CD8-positive, alpha-beta T cell (primary cell): ENCODE measurements at regions of chr17 and their contacts with region 1.

Region 1: DNA sequence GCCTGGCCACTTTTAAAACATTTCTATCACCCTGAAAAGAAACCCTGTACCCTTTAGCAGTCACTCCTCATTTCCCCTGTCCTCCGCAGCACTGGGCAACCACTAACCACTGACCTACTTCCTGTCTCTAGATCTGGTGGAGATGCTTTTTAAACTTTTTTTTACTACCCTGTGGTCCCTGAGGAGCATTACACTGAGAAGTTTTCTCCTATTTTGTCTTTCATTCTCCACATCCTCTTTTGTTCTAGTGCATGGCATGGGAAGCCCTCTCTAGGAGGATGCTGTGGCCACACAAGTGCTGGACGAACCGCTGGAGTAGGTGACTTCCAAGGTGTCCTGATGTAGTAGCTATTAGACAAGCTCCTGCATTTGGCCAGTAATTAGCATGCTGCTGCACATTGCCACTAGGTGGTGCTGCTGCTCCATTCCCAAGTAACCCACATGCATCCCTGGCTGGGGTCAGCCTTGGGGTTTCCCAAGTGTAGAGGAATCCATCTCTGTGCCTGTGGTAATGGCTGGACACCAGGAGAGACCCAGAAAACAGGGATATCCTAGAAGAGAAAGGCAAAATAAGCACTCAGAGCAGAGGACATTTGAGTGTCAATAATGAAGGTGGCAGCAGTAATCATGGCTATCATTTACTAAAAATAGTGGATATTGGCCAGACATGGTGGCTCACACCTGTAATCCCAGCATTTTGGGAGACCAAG is 143.8 kb upstream of the CRHR1 start:
- DNase-seq: peak; percentile 46 to 83 (median 74)
- ATAC-seq: peak; percentile 68
- H3K4me3 ChIP-seq: no peak overlapping the region
- H3K4me3 Mint-ChIP-seq: no peak overlapping the region
- H3K27ac ChIP-seq: no peak overlapping the region
- H3K27ac Mint-ChIP-seq: peak overlapping the region; percentile 77
- H3K4me1 ChIP-seq: no peaks in the 10 kb centered on the region
- H3K4me1 Mint-ChIP-seq: peaks cover 6% of the 10 kb centered on the region
- H3K27me3 ChIP-seq: no peaks in the 10 kb centered on the region
- H3K27me3 Mint-ChIP-seq: no peaks in the 10 kb centered on the region
- CTCF ChIP-seq: peak; percentile 94

Region 2: GRCh38 chr17:45197555-45198334 is 442.6 kb before region 1 on chr17:
- CTCF ChIA-PET with region 1: no interaction called
- POLR2A ChIA-PET with region 1: no interaction called
- intact Hi-C with region 1: no loop called
- DNase-seq: peak; percentile 75 to 93 (median 86)
- ATAC-seq: peak; percentile 100
- H3K4me3 ChIP-seq: no peak overlapping the region
- H3K4me3 Mint-ChIP-seq: no peak overlapping the region
- H3K27ac ChIP-seq: no peak overlapping the region
- H3K27ac Mint-ChIP-seq: no peak overlapping the region
- H3K4me1 ChIP-seq: peaks cover 7% of the 10 kb centered on the region
- H3K4me1 Mint-ChIP-seq: peaks cover 4% of the 10 kb centered on the region
- H3K27me3 ChIP-seq: no peaks in the 10 kb centered on the region
- H3K27me3 Mint-ChIP-seq: no peaks in the 10 kb centered on the region
- CTCF ChIP-seq: peak; percentile 85

Region 3: DNA sequence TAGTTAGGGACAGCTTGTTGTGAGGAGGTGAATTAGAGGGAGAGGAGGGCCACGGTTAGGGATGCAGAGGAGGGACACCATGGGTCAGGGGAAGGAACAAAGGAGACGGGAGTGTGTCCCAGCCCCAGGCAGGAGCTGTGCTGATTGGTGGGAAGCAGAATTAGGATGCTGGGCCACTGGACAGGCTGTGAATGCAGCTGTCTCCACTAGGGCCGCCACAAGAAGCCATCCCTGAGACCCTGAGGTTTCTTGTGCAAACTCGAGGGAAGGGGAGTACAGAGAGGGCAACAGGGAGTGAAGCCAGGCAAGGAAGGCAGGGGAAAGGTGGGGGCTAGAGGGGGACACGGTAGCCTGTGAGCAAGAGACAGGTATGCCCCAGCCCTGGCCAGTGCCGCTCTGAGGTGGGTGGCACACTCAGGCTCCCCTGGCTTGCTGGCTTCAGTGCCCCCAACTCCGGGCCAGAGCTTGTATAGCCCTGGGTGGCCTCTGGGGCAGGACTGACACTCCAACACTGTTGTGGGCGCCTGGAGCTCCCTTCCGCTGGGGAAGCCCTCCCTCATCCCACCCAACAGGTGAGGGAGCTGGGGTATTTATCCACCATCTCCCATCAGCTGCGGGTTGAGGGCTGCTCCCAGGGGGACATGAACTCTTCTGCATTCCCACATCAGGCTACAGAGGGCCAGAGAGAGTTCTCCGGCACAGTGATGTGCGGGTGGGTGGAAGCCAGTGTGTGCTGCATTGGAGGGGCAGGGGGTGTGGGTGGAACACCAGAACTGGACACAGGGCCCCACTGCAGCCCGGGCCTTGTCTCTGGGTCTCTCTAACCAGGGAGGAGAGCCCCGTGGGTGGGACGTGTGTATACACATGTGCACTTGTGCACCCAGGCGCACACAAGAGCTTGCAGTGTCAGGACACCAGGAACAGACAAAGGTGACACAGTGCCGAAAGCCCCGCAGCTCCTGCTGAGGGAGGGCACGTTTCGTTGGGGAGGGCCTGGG is 196.1 kb after region 1 on chr17:
- CTCF ChIA-PET with region 1: interaction called, 93 read pairs
- POLR2A ChIA-PET with region 1: no interaction called
- intact Hi-C with region 1: loop called in 1 of 2 experiments (anchors 1 kb)
- DNase-seq: no peak
- ATAC-seq: no peak
- H3K4me3 ChIP-seq: no peak overlapping the region
- H3K4me3 Mint-ChIP-seq: no peak overlapping the region
- H3K27ac ChIP-seq: no peak overlapping the region
- H3K27ac Mint-ChIP-seq: no peak overlapping the region
- H3K4me1 ChIP-seq: no peaks in the 10 kb centered on the region
- H3K4me1 Mint-ChIP-seq: no peaks in the 10 kb centered on the region
- H3K27me3 ChIP-seq: no peaks in the 10 kb centered on the region
- H3K27me3 Mint-ChIP-seq: peaks cover 2% of the 10 kb centered on the region
- CTCF ChIP-seq: no peak

Region 4: GRCh38 chr17:45852535-45853297 is 212.4 kb after region 1 on chr17:
- CTCF ChIA-PET with region 1: interaction called, 6 read pairs
- POLR2A ChIA-PET with region 1: no interaction called
- intact Hi-C with region 1: loop called (anchors 1 kb)
- DNase-seq: peak; percentile 22 to 72 (median 61)
- ATAC-seq: no peak
- H3K4me3 ChIP-seq: no peak overlapping the region
- H3K4me3 Mint-ChIP-seq: no peak overlapping the region
- H3K27ac ChIP-seq: no peak overlapping the region
- H3K27ac Mint-ChIP-seq: no peak overlapping the region
- H3K4me1 ChIP-seq: no peaks in the 10 kb centered on the region
- H3K4me1 Mint-ChIP-seq: peaks cover 4% of the 10 kb centered on the region
- H3K27me3 ChIP-seq: peaks cover 0 to 9% of the 10 kb centered on the region in 2 experiments
- H3K27me3 Mint-ChIP-seq: peaks cover 29% of the 10 kb centered on the region
- CTCF ChIP-seq: peak; percentile 75